ENCODE measurements at regions of chr19 and their contacts with region 1.

Region 1: DNA sequence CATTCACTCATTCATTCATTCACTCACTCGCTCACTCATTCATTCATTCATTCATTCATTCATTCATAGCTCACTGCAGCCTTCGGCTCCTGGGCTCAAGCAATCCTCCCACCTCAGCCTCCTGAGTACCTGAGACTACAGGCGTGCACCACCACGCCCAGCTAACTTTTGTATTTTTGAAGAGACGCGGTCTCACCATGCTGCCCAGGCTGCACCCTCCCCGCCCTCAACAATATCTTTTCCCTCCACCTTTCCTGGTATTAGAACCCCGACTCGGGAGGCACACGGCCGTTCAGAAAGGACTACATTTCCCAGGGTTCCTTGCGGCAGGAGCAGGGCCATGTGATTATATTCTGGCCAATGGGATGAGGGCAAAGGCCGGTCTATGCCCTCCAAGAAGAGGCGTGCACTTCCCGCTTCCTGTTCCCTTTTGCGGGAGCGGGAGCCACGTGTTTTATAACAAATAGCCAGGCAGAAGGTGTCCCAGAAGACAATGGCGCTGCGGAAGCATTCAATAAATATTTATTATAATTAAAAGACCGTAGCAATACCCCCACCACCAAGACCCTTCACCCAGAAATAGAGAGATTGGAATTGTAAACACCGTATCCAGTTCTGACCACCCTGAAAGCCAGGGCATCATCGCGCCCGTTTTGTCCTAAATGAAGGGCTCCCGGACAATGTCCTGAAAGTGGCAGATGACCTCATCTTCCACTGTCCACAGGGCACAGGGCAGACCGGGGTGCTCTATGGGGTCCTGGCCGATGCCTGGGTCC is 15.9 kb downstream of the TICAM1 start:
- DNase-seq: peak; percentile 43 to 77 (median 67)
- ATAC-seq: peak; percentile 86
- H3K4me3 ChIP-seq: peak overlapping the region; percentile 40
- H3K4me3 Mint-ChIP-seq: peak overlapping the region; percentile 68 to 88 (median 81)
- H3K27ac ChIP-seq: peak overlapping the region; percentile 48
- H3K27ac Mint-ChIP-seq: peak overlapping the region; percentile 26 to 91 (median 87)
- H3K4me1 ChIP-seq: peaks cover 4 to 14% of the 10 kb centered on the region in 2 donors
- H3K4me1 Mint-ChIP-seq: peaks cover 11 to 29% (median 18%) of the 10 kb centered on the region in 7 donors
- H3K27me3 ChIP-seq: no peaks in the 10 kb centered on the region
- H3K27me3 Mint-ChIP-seq: no peaks in the 10 kb centered on the region

Region 2: GRCh38 chr19:4606921-4607678 is 208.5 kb before region 1 on chr19:
- CTCF ChIA-PET with region 1: no interaction called
- POLR2A ChIA-PET with region 1: no interaction called
- intact Hi-C with region 1: no loop called
- DNase-seq: no peak
- ATAC-seq: no peak
- H3K4me3 ChIP-seq: no peak overlapping the region
- H3K4me3 Mint-ChIP-seq: no peak overlapping the region
- H3K27ac ChIP-seq: no peak overlapping the region
- H3K27ac Mint-ChIP-seq: peak overlapping the region in 1 of 9 donors; percentile 43
- H3K4me1 ChIP-seq: no peaks in the 10 kb centered on the region
- H3K4me1 Mint-ChIP-seq: peaks cover 0 to 6% (median 0%) of the 10 kb centered on the region in 7 donors
- H3K27me3 ChIP-seq: peaks cover 0 to 5% of the 10 kb centered on the region in 2 donors
- H3K27me3 Mint-ChIP-seq: peaks cover 21 to 30% (median 25%) of the 10 kb centered on the region in 5 donors

Region 3: DNA sequence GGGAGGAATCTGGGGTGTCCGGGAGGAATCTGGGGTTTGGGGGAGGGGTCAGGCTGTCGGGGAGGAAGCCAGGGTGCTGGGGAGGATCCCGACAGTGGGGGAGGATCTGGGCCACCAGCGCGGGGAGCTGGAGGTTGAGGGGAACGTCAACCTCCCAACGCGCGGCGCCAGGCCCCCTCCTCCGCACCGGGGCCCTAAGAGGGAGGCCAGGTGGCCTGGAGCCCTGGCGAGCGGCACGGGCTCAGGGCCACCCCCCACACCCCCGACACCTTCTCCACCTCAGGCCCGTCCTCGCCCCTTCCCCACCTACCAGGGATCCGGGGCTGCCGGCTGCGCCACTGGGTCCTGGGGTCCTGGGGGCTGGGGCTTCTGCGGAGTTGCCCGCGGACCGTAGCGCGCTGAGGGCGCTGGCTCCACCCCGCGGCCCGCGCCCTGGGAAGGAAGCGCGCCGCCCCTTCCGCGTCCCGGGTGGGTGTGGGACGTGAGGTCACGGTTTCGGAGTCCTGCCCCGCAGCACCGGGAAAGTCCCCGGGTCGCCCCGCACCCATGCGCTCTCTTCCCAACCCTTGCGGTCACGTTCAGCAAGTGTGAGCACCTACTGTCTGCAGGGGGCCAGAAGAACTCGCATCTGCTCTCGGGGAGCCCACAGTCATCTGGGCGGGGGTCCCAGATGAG is 15.8 kb after region 1 on chr19 and contains the start of gene TICAM1:
- CTCF ChIA-PET with region 1: no interaction called
- POLR2A ChIA-PET with region 1: no interaction called
- intact Hi-C with region 1: loop called (anchors 1 to 2 kb)
- DNase-seq: peak; percentile 66 to 89 (median 70)
- ATAC-seq: peak; percentile 97
- H3K4me3 ChIP-seq: peak within 1 kb of the TSS; percentile 77
- H3K4me3 Mint-ChIP-seq: peak within 1 kb of the TSS; percentile 72 to 99 (median 90)
- H3K27ac ChIP-seq: peak within 1 kb of the TSS; percentile 95
- H3K27ac Mint-ChIP-seq: peak within 1 kb of the TSS; percentile 72 to 96 (median 91)
- H3K4me1 ChIP-seq: peaks cover 4 to 16% of the 10 kb centered on the region in 2 donors
- H3K4me1 Mint-ChIP-seq: peaks cover 20 to 35% (median 26%) of the 10 kb centered on the region in 7 donors
- H3K27me3 ChIP-seq: no peaks in the 10 kb centered on the region
- H3K27me3 Mint-ChIP-seq: no peaks in the 10 kb centered on the region
- total RNA-seq, gene TICAM1: 12.5 to 28.4 (median 16.5) TPM

Region 4: GRCh38 chr19:4851551-4852290 is 36.1 kb after region 1 on chr19:
- CTCF ChIA-PET with region 1: interaction called, 109 read pairs
- POLR2A ChIA-PET with region 1: interaction called, 4 read pairs
- intact Hi-C with region 1: no loop called
- DNase-seq: peak; percentile 52 to 79 (median 67)
- ATAC-seq: peak; percentile 94
- H3K4me3 ChIP-seq: no peak overlapping the region
- H3K4me3 Mint-ChIP-seq: no peak overlapping the region
- H3K27ac ChIP-seq: no peak overlapping the region
- H3K27ac Mint-ChIP-seq: peak overlapping the region in 2 of 9 donors; percentile 31 to 54
- H3K4me1 ChIP-seq: no peaks in the 10 kb centered on the region
- H3K4me1 Mint-ChIP-seq: peaks cover 0 to 5% (median 0%) of the 10 kb centered on the region in 7 donors
- H3K27me3 ChIP-seq: no peaks in the 10 kb centered on the region
- H3K27me3 Mint-ChIP-seq: no peaks in the 10 kb centered on the region